Activated naive CD4-positive, alpha-beta T cell treated with anti-CD3 and anti-CD28 coated beads for 36 hours (primary cell): ENCODE measurements at regions of chr16 and their contacts with region 1.

Region 1: DNA sequence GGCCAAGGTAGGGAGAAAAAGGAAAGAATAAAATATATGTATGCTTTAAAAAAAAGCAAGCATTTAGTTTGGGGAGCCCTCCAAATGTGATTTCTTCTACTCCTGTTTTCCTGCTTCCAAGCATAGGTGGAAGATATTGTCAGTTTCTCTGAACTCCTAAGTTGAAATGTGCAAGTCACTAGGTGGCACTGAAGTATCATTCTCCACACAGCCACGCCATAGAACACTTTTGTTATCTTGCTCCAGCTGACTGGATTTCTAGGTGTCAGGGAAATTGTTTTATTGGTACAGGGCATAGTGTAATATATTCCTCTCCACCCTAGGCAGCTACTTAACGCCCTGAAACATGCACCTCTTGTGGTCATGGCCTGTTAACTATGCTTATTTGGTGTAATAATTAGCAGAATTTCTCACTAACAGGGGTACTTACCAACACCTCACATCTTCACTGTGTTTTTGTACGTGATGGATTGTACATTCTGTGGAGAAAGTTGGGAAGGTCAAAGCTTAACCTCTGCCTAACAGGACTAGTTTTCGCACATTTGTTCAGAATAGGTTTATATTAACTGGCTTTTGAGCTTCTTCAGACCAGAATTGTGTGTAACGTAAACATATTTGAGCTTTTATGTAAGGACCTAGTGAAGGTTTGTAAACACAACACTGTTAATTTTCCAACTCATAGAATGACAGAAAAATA is 69.3 kb downstream of the FTO start:
- DNase-seq: peak; percentile 40
- H3K4me3 Mint-ChIP-seq: no peak overlapping the region
- H3K27ac Mint-ChIP-seq: no peak overlapping the region
- H3K4me1 Mint-ChIP-seq: peaks cover 31% of the 10 kb centered on the region
- H3K27me3 Mint-ChIP-seq: no peaks in the 10 kb centered on the region

Region 2: DNA sequence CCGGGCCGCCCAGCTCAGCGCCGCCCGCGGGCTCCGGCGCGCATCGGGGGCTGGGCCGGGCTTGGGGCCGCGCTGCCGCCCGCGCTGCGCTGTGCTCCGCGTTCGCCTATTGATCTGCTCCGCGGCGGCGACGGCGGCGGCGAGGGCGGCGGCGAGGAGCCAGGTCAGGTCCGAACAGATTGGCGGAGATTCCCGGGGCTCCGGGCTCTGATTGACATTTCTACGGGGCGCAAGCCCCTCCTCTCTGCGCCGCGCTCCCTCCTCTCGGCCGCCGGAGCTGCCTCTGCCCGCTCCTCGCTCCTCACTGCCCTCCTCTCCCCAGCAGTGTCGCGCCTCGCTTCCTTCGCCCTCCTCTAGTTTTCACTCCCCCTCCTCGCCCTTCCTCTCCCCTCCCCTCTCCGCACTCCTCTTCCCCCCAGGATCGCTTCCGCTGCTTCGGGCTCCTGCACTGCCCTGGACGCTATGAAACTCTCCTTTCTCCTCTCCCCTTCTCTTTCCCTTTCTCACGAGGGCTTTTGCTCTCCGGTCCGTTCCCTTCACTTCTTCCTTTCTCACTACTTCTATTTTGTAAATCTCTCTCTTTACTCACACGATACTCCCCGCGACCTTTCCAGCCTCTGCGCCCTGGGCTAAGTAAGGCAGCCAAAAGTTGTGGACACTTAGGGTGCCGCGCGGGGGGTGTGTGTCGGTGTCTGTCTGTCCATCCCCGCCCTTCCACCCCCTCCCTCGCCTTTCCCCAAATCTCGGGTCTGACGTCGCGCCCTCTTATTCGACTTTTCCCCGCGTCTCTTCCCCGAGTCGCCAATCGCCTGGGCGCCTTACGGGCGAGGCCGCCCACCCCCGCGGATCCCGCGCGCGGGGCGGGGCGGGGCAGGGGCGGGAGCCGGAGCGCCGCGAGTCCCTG is 513.0 kb after region 1 on chr16 and contains the start of gene IRX3:
- CTCF ChIA-PET with region 1: no interaction called
- intact Hi-C with region 1: loop called (anchors 5 kb)
- DNase-seq: peak; percentile 19
- H3K4me3 Mint-ChIP-seq: peak within 1 kb of the TSS; percentile 48
- H3K27ac Mint-ChIP-seq: no peak within 1 kb of the TSS
- H3K4me1 Mint-ChIP-seq: peaks cover 41% of the 10 kb centered on the region
- H3K27me3 Mint-ChIP-seq: peaks cover 69% of the 10 kb centered on the region
- total RNA-seq, gene IRX3: not detected